HEK293 (cell line): ENCODE measurements at regions of chr14 and their contacts with region 1.

Region 1: DNA sequence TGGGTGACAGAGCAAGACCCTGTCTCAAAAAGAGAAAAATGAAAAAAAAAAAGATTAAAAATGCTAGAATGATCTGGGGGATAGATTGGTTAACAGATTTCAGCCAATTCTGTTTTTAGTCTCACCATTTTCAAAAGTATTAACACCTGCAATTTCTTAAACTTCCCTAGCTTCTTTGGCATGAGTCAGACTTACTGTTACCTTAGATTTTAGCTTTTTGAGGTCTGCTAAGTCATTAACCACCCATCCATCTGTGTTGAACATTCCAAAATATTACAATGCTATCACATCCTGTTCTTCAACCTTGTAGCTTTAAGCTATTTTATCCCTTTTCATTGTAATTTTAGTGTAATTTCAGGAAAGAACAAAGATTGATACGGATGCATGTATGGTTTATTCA is 59.3 kb downstream of the PPP1R13B start:
- H3K4me3 ChIP-seq: no peak overlapping the region
- H3K27ac ChIP-seq: no peak overlapping the region
- H3K4me1 ChIP-seq: no peaks in the 10 kb centered on the region
- CTCF ChIP-seq: no peak

Region 2: GRCh38 chr14:103594265-103594664 is 193.8 kb before region 1 on chr14:
- CTCF ChIA-PET with region 1: no interaction called
- POLR2A ChIA-PET with region 1: no interaction called
- H3K4me3 ChIP-seq: no peak overlapping the region
- H3K27ac ChIP-seq: no peak overlapping the region
- H3K4me1 ChIP-seq: peaks cover 8% of the 10 kb centered on the region
- CTCF ChIP-seq: no peak

Region 3: GRCh38 chr14:104689109-104689880 is 901.2 kb after region 1 on chr14 and contains the start of gene INF2:
- CTCF ChIA-PET with region 1: no interaction called
- POLR2A ChIA-PET with region 1: interaction called, 12 read pairs
- H3K4me3 ChIP-seq: peak within 1 kb of the TSS; percentile 85
- H3K27ac ChIP-seq: peak within 1 kb of the TSS; percentile 69; the same call in 1 of the 2 replicates
- H3K4me1 ChIP-seq: no peaks in the 10 kb centered on the region; the same call in 1 of the 2 replicates
- CTCF ChIP-seq: no peak